ENCODE measurements at regions of chr9 and their contacts with region 1.

Region 1: GRCh38 chr9:101139082-101139481 is 110.6 kb downstream of the PLPPR1 start:
- DNase-seq: no peak
- H3K4me3 ChIP-seq: no peak overlapping the region
- H3K27ac ChIP-seq: no peak overlapping the region
- H3K4me1 ChIP-seq: no peaks in the 10 kb centered on the region
- H3K27me3 ChIP-seq: no peaks in the 10 kb centered on the region
- CTCF ChIP-seq: no peak
- EP300 ChIP-seq: no peak
- POLR2A ChIP-seq: no peak

Region 2: DNA sequence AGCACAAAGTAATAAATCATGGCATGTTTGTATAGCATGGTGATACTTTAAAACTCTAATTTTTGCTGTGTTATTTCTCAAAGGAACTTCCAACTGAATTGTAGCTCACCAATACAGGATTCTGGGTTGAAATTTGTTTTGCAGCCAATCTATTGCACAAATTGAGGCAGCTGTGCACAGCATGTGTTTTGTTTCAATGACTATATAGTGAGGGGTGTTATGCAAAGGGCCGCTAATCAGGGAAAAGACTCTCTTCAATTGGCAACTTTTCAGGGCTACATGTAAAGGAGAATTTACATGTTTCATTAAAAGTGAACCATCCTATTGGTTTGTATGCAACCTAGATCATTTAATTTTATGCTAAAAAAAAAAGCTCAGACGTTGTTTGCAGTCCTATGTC is 66.0 kb before region 1 on chr9:
- in situ Hi-C with region 1: loop called in 1 of 4 experiments (anchors 10 kb)
- intact Hi-C with region 1: no loop called
- DNase-seq: no peak
- H3K4me3 ChIP-seq: no peak overlapping the region
- H3K27ac ChIP-seq: no peak overlapping the region
- H3K4me1 ChIP-seq: no peaks in the 10 kb centered on the region
- H3K27me3 ChIP-seq: no peaks in the 10 kb centered on the region
- CTCF ChIP-seq: no peak
- EP300 ChIP-seq: no peak
- POLR2A ChIP-seq: no peak

Region 3: DNA sequence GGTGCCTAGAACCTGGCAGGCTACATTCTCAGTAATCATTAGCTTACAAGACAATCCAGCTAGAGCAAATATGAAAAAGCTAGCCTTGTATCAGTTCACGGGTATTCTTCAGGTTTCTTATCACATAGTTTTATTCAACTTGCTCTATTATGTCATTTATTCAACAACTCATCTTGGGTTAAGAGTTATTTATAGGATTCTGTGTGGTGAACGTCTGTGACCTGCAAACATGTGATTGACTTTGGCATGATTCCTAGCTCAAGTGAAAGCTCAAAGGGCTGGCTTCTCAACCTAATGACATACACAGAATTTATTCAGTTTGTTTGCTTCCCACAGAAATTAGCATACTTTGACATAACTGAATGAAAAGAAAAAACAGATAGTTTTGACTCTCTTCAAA is 62.5 kb after region 1 on chr9:
- in situ Hi-C with region 1: no loop called
- intact Hi-C with region 1: no loop called
- DNase-seq: no peak
- H3K4me3 ChIP-seq: no peak overlapping the region
- H3K27ac ChIP-seq: no peak overlapping the region
- H3K4me1 ChIP-seq: no peaks in the 10 kb centered on the region
- H3K27me3 ChIP-seq: no peaks in the 10 kb centered on the region
- CTCF ChIP-seq: no peak
- EP300 ChIP-seq: no peak
- POLR2A ChIP-seq: no peak

Measured in transverse colon (tissue), 4 donors.